HepG2 (cell line): ENCODE measurements at regions of chr16 and their contacts with region 1.

Region 1: GRCh38 chr16:68704232-68704867 is 32.7 kb upstream of the CDH1 start:
- DNase-seq: peak; percentile 89
- ATAC-seq: peak; percentile 84
- H3K4me3 ChIP-seq: no peak overlapping the region
- H3K27ac ChIP-seq: no peak overlapping the region
- H3K4me1 ChIP-seq: peaks cover 40% of the 10 kb centered on the region
- H3K27me3 ChIP-seq: peaks cover 0 to 23% of the 10 kb centered on the region in 2 experiments; a peak in 3 of 5 replicates
- CTCF ChIP-seq: peak; percentile 99
- EP300 ChIP-seq: 0 out of 4 replicates have a peak, but pooled peaks of 1 of the 2 experiments have one; percentile 39
- POLR2A ChIP-seq: no peak
- RAD21 ChIP-seq: peak; percentile 99

Region 2: GRCh38 chr16:68528686-68529379 is 175.5 kb before region 1 on chr16:
- CTCF ChIA-PET with region 1: no interaction called
- POLR2A ChIA-PET with region 1: interaction called, 3 read pairs
- in situ Hi-C with region 1: no loop called
- intact Hi-C with region 1: loop called (anchors 1 kb)
- DNase-seq: peak; percentile 85
- ATAC-seq: peak; percentile 79
- H3K4me3 ChIP-seq: peak overlapping the region in 2 of 3 experiments; percentile 2 to 86; a peak in 2 of 6 replicates
- H3K27ac ChIP-seq: peak overlapping the region; percentile 5
- H3K4me1 ChIP-seq: peaks cover 52% of the 10 kb centered on the region
- H3K27me3 ChIP-seq: no peaks in the 10 kb centered on the region
- CTCF ChIP-seq: peak; percentile 99
- EP300 ChIP-seq: no peak
- POLR2A ChIP-seq: peak in 1 of 2 experiments; percentile 22; a peak in 1 of 4 replicates
- RAD21 ChIP-seq: peak; percentile 98

Region 3: DNA sequence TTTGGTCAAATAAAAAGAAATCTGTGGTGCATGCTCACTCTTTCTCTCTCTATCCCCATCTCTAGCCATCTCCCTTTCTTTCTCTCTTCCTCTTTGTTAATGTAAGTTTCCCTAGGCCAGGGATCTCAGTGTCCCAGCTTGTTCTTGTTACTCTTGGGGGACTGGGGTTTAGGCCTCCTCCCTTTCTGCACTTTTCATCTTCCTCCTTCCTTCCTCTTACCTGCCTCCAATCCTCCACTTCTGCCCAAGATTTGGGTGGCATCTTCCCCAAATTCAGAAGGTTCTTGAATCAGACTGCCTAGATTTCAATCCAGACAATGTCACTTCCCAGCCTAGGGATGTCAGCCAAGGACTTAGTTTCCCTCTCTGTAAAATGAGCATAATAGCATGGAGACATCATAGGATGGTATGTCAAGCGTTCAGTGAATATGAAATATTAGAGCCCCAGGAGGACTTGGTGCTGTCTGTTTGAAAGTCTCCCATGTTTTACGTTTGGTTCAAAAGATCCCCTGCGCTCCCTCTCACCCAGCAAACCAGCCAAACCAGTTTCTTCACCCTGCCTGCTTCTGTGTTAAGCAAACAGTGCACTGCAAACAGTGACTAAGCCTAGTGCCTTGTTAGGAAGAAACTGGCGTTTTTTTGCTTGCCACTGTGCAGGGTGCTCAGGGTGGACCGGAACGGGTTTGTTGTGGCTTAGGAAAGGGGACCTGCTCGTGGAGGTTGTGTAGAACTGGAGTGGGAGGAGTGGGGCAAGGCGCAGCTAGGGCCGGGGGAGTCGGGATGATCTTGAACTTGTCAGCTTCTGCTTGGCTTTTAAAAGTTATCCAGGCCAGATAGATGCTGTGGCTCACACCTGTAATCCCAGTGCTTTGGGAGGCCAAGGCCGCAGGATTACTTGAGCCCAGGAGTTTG is 40.3 kb after region 1 on chr16:
- CTCF ChIA-PET with region 1: no interaction called
- POLR2A ChIA-PET with region 1: interaction called, 19 read pairs
- in situ Hi-C with region 1: no loop called
- intact Hi-C with region 1: loop called (anchors 2 kb)
- DNase-seq: peak; percentile 97
- ATAC-seq: peak; percentile 90
- H3K4me3 ChIP-seq: peak overlapping the region in 1 of 3 experiments; percentile 30; a peak in 2 of 6 replicates
- H3K27ac ChIP-seq: peak overlapping the region; percentile 83
- H3K4me1 ChIP-seq: peaks cover 87% of the 10 kb centered on the region
- H3K27me3 ChIP-seq: no peaks in the 10 kb centered on the region
- CTCF ChIP-seq: peak; percentile 40
- EP300 ChIP-seq: peak; percentile 80 to 95; a peak in 3 of 4 replicates
- POLR2A ChIP-seq: peak in 1 of 2 experiments; percentile 32; a peak in 1 of 4 replicates
- RAD21 ChIP-seq: peak; percentile 66

Region 4: GRCh38 chr16:68800257-68800875 is 96.0 kb after region 1 on chr16:
- CTCF ChIA-PET with region 1: interaction called, 94 read pairs
- POLR2A ChIA-PET with region 1: no interaction called
- in situ Hi-C with region 1: loop called (anchors 5 kb)
- intact Hi-C with region 1: loop called (anchors 1 kb)
- DNase-seq: peak; percentile 77
- ATAC-seq: peak; percentile 95
- H3K4me3 ChIP-seq: no peak overlapping the region
- H3K27ac ChIP-seq: no peak overlapping the region
- H3K4me1 ChIP-seq: peaks cover 21% of the 10 kb centered on the region
- H3K27me3 ChIP-seq: no peaks in the 10 kb centered on the region
- CTCF ChIP-seq: peak; percentile 94
- EP300 ChIP-seq: no peak
- POLR2A ChIP-seq: no peak
- RAD21 ChIP-seq: peak; percentile 96

Region 5: GRCh38 chr16:69123910-69124309 is 419.6 kb after region 1 on chr16:
- CTCF ChIA-PET with region 1: interaction called, 4 read pairs
- POLR2A ChIA-PET with region 1: no interaction called
- in situ Hi-C with region 1: loop called (anchors 25 kb)
- intact Hi-C with region 1: no loop called
- DNase-seq: peak; percentile 85
- ATAC-seq: peak; percentile 62
- H3K4me3 ChIP-seq: no peak overlapping the region
- H3K27ac ChIP-seq: no peak overlapping the region
- H3K4me1 ChIP-seq: peaks cover 13% of the 10 kb centered on the region
- H3K27me3 ChIP-seq: no peaks in the 10 kb centered on the region
- CTCF ChIP-seq: peak; percentile 85
- EP300 ChIP-seq: no peak
- POLR2A ChIP-seq: no peak
- RAD21 ChIP-seq: peak; percentile 82